Spleen (tissue), 13 donors: ENCODE measurements at regions of chr19 and their contacts with region 1.

Region 1: DNA sequence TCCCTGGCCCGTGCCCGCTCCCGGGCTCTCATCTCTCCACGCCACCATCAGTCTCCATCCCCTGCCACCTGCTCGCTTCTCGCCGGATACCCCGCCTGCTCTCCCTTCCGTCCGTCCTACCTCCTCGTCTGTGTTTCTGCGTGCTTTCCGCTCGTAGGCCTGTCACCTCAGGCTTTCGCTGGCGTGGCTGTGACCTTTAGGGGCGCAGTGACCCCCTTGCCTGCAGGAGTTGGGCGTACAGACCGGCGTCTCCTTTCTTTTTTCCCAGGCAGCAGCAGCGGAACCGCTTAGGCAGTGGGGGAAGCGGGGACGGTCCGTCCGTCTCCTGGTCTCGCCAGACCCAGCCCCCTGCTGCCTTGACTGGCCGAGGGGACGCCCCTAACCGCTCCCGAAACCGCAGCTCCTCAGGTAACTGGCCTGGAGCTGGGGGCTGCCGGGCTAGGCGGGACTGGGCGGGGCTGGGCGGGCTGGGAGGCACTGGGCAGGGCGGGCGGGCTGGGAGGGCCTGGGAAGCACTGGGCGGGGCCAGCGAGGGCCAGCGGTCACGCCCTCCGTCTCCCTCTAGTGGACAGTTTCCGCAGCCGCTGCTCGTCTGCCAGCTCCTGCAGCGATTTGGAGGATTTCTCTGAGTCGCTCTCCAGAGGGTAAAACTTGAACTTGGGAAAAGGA is 6.3 kb downstream of the PGLYRP1 start:
- DNase-seq: peak; percentile 95
- H3K4me3 ChIP-seq: peak overlapping the region; percentile 53 to 94 (median 75)
- H3K27ac ChIP-seq: peak overlapping the region in 7 of 8 donors; percentile 46 to 89 (median 71)
- H3K4me1 ChIP-seq: peaks cover 0 to 46% (median 28%) of the 10 kb centered on the region in 6 donors
- H3K27me3 ChIP-seq: peaks cover 0 to 40% (median 18%) of the 10 kb centered on the region in 7 donors
- CTCF ChIP-seq: peak in 10 of 11 experiments; percentile 44 to 97 (median 94)
- POLR2A ChIP-seq: no peak

Region 2: GRCh38 chr19:45902651-45903625 is 113.6 kb before region 1 on chr19:
- intact Hi-C with region 1: no loop called
- DNase-seq: peak; percentile 100
- H3K4me3 ChIP-seq: peak overlapping the region; percentile 65 to 91 (median 72)
- H3K27ac ChIP-seq: peak overlapping the region; percentile 61 to 92 (median 84)
- H3K4me1 ChIP-seq: peaks cover 15 to 47% (median 26%) of the 10 kb centered on the region in 6 donors
- H3K27me3 ChIP-seq: no peaks in the 10 kb centered on the region
- CTCF ChIP-seq: peak in 6 of 11 experiments; percentile 15 to 58 (median 27)
- POLR2A ChIP-seq: peak in 2 of 3 donors; percentile 40 to 65

Region 3: GRCh38 chr19:45927565-45928261 is 88.8 kb before region 1 on chr19:
- intact Hi-C with region 1: loop called (anchors 10 kb)
- DNase-seq: peak; percentile 93
- H3K4me3 ChIP-seq: peak overlapping the region in 1 of 8 donors; percentile 26
- H3K27ac ChIP-seq: no peak overlapping the region
- H3K4me1 ChIP-seq: peaks cover 4 to 11% (median 8%) of the 10 kb centered on the region in 6 donors
- H3K27me3 ChIP-seq: peaks cover 0 to 31% (median 0%) of the 10 kb centered on the region in 7 donors
- CTCF ChIP-seq: peak in 5 of 11 experiments; percentile 7 to 22 (median 7)
- POLR2A ChIP-seq: no peak